ENCODE measurements at regions of chr15 and their contacts with region 1.

Region 1: DNA sequence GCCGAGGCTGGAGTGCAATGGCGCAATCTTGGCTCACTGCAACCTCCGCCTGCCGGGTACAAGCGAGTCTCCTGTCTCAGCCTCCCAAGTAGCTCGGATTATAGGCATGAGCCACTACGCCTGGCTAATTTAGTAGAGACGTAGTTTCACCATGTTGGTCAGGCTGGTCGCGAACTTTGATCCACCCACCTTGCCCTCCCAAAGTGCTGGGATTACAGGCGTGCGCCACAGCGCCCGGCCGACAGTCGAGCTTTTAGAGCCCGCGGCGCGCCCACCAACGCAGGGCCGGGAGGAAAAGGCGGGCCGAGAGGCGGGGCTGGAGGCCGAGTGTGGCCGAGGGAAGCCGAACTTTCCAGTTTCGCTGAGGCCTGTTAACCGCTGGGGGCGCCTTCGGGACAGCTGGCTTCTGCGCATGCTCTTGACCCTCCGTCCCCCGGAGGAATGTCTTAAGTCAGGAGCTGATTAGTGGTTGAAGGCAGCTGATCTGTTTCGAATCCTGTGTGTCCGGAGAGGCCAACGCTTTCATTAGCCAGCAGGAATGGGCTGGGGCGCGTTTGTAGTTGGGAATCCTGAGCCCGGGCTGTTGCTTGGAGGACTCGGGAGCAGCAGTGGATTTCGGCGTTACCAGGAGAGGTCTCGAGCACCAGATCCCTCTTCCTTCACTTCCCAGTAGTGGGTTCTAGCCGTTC is 10.0 kb downstream of the RPLP1 start:
- DNase-seq: peak; percentile 88
- H3K4me3 Mint-ChIP-seq: peak overlapping the region; percentile 84
- H3K27ac Mint-ChIP-seq: peak overlapping the region; percentile 71
- H3K4me1 Mint-ChIP-seq: peaks cover 15% of the 10 kb centered on the region
- H3K27me3 Mint-ChIP-seq: peaks cover 16% of the 10 kb centered on the region

Region 2: DNA sequence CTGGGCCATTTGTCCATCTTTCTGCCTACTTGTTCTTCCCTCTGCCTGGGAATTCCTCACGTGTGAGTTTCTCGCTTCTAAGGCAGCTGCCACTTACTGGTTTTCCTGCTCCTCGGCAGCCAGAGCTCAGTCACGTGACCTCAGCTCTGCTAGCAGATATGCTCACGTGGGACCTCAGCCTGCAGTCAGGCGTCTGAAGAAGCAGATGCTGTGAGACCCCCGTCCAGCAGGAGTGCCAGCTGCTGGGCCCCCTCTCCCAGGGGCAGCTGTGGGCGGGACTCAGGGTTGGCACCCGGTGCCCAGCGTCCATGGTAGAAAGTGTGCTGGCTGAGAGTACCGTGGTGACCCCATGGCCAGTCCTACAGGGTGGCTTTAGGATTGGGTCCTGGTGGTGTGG is 796.4 kb after region 1 on chr15:
- intact Hi-C with region 1: loop called (anchors 10 kb)
- DNase-seq: peak; percentile 37
- H3K4me3 Mint-ChIP-seq: no peak overlapping the region
- H3K27ac Mint-ChIP-seq: no peak overlapping the region
- H3K4me1 Mint-ChIP-seq: peaks cover 35% of the 10 kb centered on the region
- H3K27me3 Mint-ChIP-seq: peaks cover 46% of the 10 kb centered on the region